SK-N-SH (cell line): ENCODE measurements at regions of chr2 and their contacts with region 1.

Region 1: GRCh38 chr2:44955593-44956392 is 14.3 kb downstream of the SIX3 start:
- DNase-seq: peak; percentile 94
- H3K4me3 ChIP-seq: peak overlapping the region; percentile 38; a peak in 3 of 4 replicates
- H3K27ac ChIP-seq: no peak overlapping the region
- H3K4me1 ChIP-seq: peaks cover 0 to 17% of the 10 kb centered on the region in 2 experiments; a peak in 1 of 4 replicates
- H3K27me3 ChIP-seq: no peaks in the 10 kb centered on the region
- CTCF ChIP-seq: peak; percentile 94
- EP300 ChIP-seq: no peak
- RAD21 ChIP-seq: peak; percentile 99

Region 2: DNA sequence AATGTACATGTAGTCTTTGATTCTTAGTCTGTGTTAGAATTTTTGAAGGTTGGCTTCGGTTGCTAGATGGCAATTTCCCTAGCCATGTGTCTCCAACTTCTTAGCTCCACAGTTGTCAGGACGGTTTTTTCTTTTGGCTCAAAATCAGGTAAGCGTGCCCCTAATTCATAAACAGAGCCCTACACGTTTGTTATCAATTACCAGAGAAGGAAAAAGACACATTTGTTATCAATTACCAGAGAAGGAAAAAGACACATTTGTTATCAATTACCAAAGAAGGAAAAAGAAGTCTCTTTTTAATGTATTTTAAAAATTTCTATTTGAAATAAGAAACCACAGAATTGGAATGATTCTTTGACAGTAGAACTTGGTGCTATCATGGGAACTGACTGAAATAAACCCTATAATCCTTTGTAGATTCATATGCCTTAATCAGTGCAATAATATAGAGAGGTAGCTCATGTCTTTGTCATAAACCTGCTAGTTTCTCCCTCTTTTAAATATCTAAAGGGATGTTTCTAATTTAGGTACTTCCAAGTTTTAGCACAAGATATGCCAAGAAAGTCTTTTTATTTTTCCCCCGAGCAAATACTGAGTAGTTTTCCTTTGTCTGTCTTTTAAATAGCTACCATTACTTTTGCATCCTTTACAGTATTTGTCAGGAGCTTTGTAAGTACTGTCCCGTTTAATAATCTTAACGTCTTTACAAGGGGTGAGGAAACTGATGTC is 558.2 kb before region 1 on chr2:
- CTCF ChIA-PET with region 1: interaction called, 299 read pairs
- POLR2A ChIA-PET with region 1: interaction called, 3 read pairs
- DNase-seq: no peak
- H3K4me3 ChIP-seq: no peak overlapping the region
- H3K27ac ChIP-seq: peak overlapping the region in 1 of 2 experiments; percentile 18; a peak in 1 of 4 replicates
- H3K4me1 ChIP-seq: peaks cover 0 to 8% of the 10 kb centered on the region in 2 experiments; a peak in 2 of 4 replicates
- H3K27me3 ChIP-seq: no peaks in the 10 kb centered on the region
- CTCF ChIP-seq: no peak
- EP300 ChIP-seq: no peak
- RAD21 ChIP-seq: no peak

Region 3: DNA sequence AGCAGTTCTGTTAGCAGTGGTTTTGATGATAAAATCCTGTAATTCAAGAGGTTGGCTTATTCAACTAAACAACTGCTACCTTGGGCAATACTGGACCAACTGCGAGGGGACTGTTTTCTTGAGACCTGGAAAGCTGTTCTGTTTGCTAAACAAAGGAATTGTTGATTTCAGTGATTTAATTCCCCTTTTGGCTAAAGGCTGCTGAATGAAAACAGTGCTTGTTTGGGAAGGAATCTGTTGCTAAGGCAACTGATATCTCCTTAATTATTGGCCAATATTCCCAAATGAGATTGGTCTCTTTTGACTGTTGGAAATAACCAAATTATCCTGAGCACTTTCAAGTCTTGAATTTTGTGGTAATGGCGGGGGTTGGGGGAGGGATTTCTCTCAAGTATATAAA is 457.2 kb before region 1 on chr2:
- CTCF ChIA-PET with region 1: interaction called, 12 read pairs
- POLR2A ChIA-PET with region 1: no interaction called
- DNase-seq: no peak
- H3K4me3 ChIP-seq: no peak overlapping the region
- H3K27ac ChIP-seq: peak overlapping the region in 1 of 2 experiments; percentile 1; a peak in 1 of 4 replicates
- H3K4me1 ChIP-seq: no peaks in the 10 kb centered on the region
- H3K27me3 ChIP-seq: no peaks in the 10 kb centered on the region
- CTCF ChIP-seq: no peak
- EP300 ChIP-seq: no peak
- RAD21 ChIP-seq: no peak

Region 4: GRCh38 chr2:44674473-44675284 is 281.1 kb before region 1 on chr2:
- CTCF ChIA-PET with region 1: interaction called, 15 read pairs
- POLR2A ChIA-PET with region 1: no interaction called
- DNase-seq: no peak
- H3K4me3 ChIP-seq: no peak overlapping the region
- H3K27ac ChIP-seq: peak overlapping the region in 1 of 2 experiments; percentile 7; a peak in 1 of 4 replicates
- H3K4me1 ChIP-seq: peaks cover 0 to 39% of the 10 kb centered on the region in 2 experiments; a peak in 2 of 4 replicates
- H3K27me3 ChIP-seq: no peaks in the 10 kb centered on the region; the same call in 1 of the 2 replicates
- CTCF ChIP-seq: no peak
- EP300 ChIP-seq: no peak
- RAD21 ChIP-seq: no peak

Region 5: DNA sequence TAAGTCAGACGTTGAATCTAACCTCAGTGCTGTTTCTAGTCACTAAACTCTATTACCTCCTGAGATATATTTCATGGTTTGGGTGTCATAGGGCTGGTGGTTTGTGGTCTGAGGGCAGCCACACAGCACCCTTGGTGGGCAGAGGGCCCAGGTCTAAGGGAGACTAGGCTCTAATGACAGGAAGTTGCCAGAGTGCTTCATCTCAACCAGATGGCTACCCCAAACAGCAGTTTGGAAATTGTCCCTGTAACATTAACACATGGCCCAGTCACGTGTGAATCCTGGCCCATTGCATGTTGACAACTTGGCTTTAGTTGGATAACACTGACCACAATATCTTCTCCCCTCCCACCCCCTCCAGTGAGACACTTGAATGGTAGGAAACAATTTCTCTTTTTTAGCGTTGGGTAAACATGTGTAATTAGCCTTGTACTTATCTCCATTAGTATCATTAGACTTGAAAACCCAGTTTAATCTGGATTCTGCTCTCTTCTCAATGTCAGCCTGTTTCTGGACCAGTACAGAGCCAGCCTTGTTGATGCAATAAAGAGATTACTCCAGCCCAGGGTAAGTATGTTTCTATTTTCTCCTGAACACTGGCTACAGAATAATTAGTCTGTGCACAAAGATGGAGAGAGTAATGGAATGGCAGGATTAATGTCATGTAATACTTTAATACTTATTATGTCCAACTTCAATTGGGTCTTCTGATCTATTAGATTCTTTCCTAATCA is 202.1 kb before region 1 on chr2:
- CTCF ChIA-PET with region 1: interaction called, 10 read pairs
- POLR2A ChIA-PET with region 1: no interaction called
- DNase-seq: peak; percentile 58
- H3K4me3 ChIP-seq: no peak overlapping the region
- H3K27ac ChIP-seq: peak overlapping the region in 1 of 2 experiments; percentile 84; a peak in 2 of 4 replicates
- H3K4me1 ChIP-seq: peaks cover 0 to 11% of the 10 kb centered on the region in 2 experiments; a peak in 2 of 4 replicates
- H3K27me3 ChIP-seq: no peaks in the 10 kb centered on the region
- CTCF ChIP-seq: no peak
- EP300 ChIP-seq: peak in 1 of 2 experiments; percentile 62; a peak in 1 of 4 replicates
- RAD21 ChIP-seq: no peak

Region 6: DNA sequence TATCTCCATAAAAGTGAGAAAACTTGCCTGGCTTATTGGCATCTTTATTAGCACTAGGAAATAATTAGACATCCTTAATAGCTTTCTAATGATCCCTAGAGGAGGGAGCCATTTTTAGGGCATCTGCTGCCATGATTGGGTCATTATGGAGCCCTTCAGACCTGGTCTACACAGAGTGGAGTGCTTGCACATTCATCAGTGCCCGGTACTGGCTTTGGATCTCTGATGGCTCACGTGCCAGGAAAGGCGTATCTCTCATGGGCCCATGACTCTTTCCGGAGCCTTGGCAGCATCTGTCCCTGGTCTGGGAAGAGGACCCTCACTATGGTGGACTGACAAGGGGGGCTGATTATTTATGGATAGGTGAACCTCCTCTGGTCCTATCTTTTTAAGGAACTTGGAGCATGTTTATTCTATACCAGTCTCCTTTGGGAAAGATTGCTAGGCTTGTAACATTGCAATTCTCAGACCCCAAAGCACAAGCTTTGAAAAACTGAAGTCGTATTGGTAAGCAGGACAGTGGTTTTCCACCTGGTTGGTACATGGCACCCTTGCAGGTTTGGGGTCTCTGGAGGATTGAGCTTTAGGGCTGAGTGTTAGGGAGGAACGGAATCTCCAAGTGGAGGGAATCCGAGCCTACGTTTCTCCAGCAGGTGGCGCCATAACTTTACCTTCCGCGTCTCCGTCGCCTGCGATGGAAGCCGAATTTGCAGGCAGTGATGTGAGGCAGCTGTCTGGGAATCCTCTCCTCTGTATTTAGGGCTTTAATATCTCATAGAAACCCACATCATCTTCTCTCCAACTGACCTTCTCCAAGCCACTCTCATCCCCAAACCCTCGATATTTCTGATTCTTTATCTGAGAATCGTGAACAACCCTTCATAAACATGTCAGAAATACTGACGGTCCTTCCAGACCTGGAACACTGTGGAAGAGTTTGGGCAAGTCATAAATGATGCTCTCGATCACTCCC is 25.6 kb after region 1 on chr2:
- CTCF ChIA-PET with region 1: interaction called, 127 read pairs
- POLR2A ChIA-PET with region 1: no interaction called
- DNase-seq: peak; percentile 87
- H3K4me3 ChIP-seq: peak overlapping the region in 1 of 2 experiments; percentile 10; a peak in 1 of 4 replicates
- H3K27ac ChIP-seq: no peak overlapping the region
- H3K4me1 ChIP-seq: no peaks in the 10 kb centered on the region; a peak in 1 of 4 replicates
- H3K27me3 ChIP-seq: no peaks in the 10 kb centered on the region
- CTCF ChIP-seq: peak; percentile 93
- EP300 ChIP-seq: no peak
- RAD21 ChIP-seq: peak; percentile 100

Region 7: GRCh38 chr2:45024600-45025291 is 69.0 kb after region 1 on chr2:
- CTCF ChIA-PET with region 1: no interaction called
- POLR2A ChIA-PET with region 1: no interaction called
- DNase-seq: no peak
- H3K4me3 ChIP-seq: no peak overlapping the region
- H3K27ac ChIP-seq: no peak overlapping the region
- H3K4me1 ChIP-seq: no peaks in the 10 kb centered on the region; a peak in 1 of 4 replicates
- H3K27me3 ChIP-seq: no peaks in the 10 kb centered on the region
- CTCF ChIP-seq: peak; percentile 67
- EP300 ChIP-seq: peak in 1 of 2 experiments; percentile 82; a peak in 2 of 4 replicates
- RAD21 ChIP-seq: peak; percentile 52